ENCODE measurements at regions of chr10 and their contacts with region 1.

Region 1: DNA sequence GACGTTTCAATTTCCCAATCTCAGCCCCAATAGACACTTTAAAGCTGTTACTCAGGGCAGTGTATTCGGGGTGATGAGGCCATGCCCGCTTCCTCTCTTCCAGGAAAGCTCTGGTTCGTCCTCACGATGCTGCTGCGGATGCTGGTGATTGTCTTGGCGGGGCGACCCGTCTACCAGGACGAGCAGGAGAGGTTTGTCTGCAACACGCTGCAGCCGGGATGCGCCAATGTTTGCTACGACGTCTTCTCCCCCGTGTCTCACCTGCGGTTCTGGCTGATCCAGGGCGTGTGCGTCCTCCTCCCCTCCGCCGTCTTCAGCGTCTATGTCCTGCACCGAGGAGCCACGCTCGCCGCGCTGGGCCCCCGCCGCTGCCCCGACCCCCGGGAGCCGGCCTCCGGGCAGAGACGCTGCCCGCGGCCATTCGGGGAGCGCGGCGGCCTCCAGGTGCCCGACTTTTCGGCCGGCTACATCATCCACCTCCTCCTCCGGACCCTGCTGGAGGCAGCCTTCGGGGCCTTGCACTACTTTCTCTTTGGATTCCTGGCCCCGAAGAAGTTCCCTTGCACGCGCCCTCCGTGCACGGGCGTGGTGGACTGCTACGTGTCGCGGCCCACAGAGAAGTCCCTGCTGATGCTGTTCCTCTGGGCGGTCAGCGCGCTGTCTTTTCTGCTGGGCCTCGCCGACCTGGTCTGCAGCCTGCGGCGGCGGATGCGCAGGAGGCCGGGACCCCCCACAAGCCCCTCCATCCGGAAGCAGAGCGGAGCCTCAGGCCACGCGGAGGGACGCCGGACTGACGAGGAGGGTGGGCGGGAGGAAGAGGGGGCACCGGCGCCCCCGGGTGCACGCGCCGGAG is 2.6 kb downstream of the GJD4 start:
- DNase-seq: no peak
- H3K4me3 ChIP-seq: peak overlapping the region; percentile 25
- H3K27ac ChIP-seq: no peak overlapping the region
- H3K4me1 ChIP-seq: peaks cover 3% of the 10 kb centered on the region
- H3K27me3 ChIP-seq: no peaks in the 10 kb centered on the region
- CTCF ChIP-seq: no peak

Region 2: GRCh38 chr10:35236739-35237138 is 371.0 kb before region 1 on chr10:
- CTCF ChIA-PET with region 1: no interaction called
- POLR2A ChIA-PET with region 1: no interaction called
- intact Hi-C with region 1: loop called (anchors 10 kb)
- DNase-seq: peak; percentile 66
- H3K4me3 ChIP-seq: no peak overlapping the region
- H3K27ac ChIP-seq: peak overlapping the region; percentile 40
- H3K4me1 ChIP-seq: peaks cover 16% of the 10 kb centered on the region
- H3K27me3 ChIP-seq: no peaks in the 10 kb centered on the region
- CTCF ChIP-seq: peak; percentile 65

Region 3: GRCh38 chr10:35563261-35563891 is 44.3 kb before region 1 on chr10:
- CTCF ChIA-PET with region 1: no interaction called
- POLR2A ChIA-PET with region 1: no interaction called
- intact Hi-C with region 1: no loop called
- DNase-seq: peak; percentile 88
- H3K4me3 ChIP-seq: no peak overlapping the region
- H3K27ac ChIP-seq: no peak overlapping the region
- H3K4me1 ChIP-seq: peaks cover 15% of the 10 kb centered on the region
- H3K27me3 ChIP-seq: no peaks in the 10 kb centered on the region
- CTCF ChIP-seq: peak; percentile 100

Region 4: GRCh38 chr10:35896001-35896400 is 288.3 kb after region 1 on chr10:
- CTCF ChIA-PET with region 1: no interaction called
- POLR2A ChIA-PET with region 1: no interaction called
- intact Hi-C with region 1: no loop called
- DNase-seq: no peak
- H3K4me3 ChIP-seq: no peak overlapping the region
- H3K27ac ChIP-seq: no peak overlapping the region
- H3K4me1 ChIP-seq: peaks cover 13% of the 10 kb centered on the region
- H3K27me3 ChIP-seq: no peaks in the 10 kb centered on the region
- CTCF ChIP-seq: no peak